Activated T-helper 2 cell treated with anti-CD3 and anti-CD28 coated beads, Interferon-gamma antibody, Interleukin-2, Interleukin-4, amounts not matched to agents 10 μg/mL and 5 μg/mL and 100 μg/mL, durations not matched to agents 14 hours and 24 hours and 36 hours (primary cell): ENCODE measurements at regions of chr18 and their contacts with region 1.

Region 1: DNA sequence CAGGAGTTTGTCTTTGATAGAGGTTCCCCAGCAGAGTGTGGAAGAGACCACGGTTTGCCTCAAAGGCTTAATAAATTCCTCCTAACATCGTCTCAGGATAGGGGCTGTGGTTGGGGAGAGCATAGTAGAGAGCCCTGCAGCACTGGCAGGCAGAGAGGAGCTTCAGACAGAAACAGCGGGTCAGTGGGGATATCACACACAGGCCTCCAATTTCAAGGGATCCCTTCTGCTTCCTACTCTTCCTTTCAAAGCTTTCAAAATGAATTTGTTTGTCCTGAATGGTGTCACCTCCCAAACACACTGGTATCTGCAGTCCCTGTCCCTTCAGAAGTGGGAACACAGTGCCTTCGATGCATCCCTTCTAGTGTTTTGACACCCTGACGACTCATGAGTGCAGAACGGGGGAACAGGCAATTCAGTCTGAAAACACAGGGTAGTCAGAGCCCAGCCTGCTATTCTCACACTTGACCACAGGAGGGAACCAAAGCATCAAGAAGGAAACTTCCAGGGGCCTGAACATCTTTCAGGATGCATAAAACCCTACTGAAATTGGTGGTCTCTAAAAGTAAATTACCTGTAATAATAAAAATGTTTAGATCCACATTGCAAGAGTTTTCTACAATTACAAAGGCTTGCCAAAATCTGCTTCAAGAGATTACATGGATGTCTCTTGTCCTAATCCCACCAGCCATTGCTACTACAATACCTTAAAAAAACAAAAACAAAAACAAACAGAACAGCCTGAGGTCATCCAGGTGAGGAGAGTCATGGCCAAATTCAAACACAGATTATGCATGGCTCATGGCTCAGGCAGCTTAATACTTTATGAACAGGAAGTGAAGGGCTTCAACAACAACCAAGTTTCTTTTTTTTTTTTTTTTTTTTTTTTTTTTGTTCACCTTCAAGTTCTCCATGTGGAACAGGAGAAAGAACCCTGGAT is 49.8 kb downstream of the SLC14A2 start:
- DNase-seq: peak; percentile 54
- H3K4me3 Mint-ChIP-seq: no peak overlapping the region
- H3K27ac Mint-ChIP-seq: peak overlapping the region; percentile 48
- H3K4me1 Mint-ChIP-seq: peaks cover 50% of the 10 kb centered on the region
- H3K27me3 Mint-ChIP-seq: peaks cover 14% of the 10 kb centered on the region

Region 2: DNA sequence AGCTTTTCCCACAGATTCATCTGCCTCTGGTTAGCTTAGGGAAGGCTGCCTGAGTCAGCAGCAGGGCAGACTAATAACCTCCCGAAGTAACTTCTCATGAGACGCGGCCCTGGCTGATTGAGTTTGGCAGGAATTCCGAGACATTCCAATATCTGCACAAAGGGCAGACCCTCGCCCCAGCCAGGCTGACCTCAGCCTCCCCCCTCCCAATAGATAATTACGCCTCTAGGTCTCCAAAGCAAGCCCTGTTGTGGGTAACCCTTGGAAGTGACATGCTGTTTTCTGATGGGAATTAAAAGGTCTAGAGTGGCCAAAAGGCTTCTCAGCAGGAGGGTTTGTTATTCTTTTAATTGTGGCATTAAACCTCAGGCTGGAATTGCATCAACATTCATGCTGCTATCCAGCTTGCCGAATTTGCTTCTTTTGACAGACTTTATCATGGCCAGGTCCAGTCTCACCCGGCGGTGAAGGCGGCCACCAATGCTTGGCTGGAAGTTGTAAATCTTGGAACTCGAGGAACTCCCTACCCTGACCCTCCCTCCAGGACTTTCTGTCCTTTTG is 147.8 kb before region 1 on chr18:
- intact Hi-C with region 1: no loop called
- DNase-seq: no peak
- H3K4me3 Mint-ChIP-seq: no peak overlapping the region
- H3K27ac Mint-ChIP-seq: no peak overlapping the region
- H3K4me1 Mint-ChIP-seq: peaks cover 2% of the 10 kb centered on the region
- H3K27me3 Mint-ChIP-seq: no peaks in the 10 kb centered on the region

Region 3: GRCh38 chr18:45626330-45627203 is 38.5 kb before region 1 on chr18:
- intact Hi-C with region 1: no loop called
- DNase-seq: no peak
- H3K4me3 Mint-ChIP-seq: no peak overlapping the region
- H3K27ac Mint-ChIP-seq: no peak overlapping the region
- H3K4me1 Mint-ChIP-seq: peaks cover 2% of the 10 kb centered on the region
- H3K27me3 Mint-ChIP-seq: peaks cover 16% of the 10 kb centered on the region

Region 4: DNA sequence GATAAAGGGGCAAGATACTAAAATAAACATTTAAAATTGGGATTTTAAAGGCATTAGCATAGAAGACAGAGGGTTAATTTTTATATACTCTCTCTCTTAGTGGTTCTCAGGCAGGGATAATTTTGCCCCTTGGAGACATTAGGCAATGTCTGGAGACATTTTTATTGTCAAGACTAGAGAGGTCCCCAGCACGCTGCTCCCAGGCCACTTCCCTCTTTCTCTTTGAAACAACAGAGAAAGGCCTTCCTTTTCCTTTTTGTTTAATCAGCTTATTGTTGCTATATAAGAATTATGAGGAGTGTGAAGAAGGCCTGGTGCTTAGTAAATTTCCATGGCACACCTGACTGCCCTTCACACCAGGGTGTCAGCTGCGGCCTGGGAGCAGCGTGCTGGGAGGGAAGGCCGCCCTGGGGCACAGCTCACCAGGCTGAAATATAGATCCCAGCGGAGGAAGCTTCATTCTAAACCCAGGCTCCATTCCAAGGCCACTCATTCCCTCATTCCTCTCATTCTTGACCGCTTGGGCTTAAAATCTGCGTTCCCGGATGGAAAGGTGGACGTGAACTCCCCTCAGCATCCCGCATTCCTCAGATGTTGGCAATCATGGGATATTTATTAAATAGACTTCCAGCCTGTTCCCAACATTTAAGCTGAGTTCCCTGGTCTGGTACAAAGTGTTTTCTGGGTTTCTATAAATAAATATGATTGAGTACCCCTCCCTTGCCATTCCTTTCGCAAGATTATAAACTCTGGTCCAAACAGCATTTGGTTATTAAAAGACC is 27.4 kb before region 1 on chr18:
- intact Hi-C with region 1: no loop called
- DNase-seq: no peak
- H3K4me3 Mint-ChIP-seq: no peak overlapping the region
- H3K27ac Mint-ChIP-seq: no peak overlapping the region
- H3K4me1 Mint-ChIP-seq: no peaks in the 10 kb centered on the region
- H3K27me3 Mint-ChIP-seq: peaks cover 11% of the 10 kb centered on the region

Region 5: DNA sequence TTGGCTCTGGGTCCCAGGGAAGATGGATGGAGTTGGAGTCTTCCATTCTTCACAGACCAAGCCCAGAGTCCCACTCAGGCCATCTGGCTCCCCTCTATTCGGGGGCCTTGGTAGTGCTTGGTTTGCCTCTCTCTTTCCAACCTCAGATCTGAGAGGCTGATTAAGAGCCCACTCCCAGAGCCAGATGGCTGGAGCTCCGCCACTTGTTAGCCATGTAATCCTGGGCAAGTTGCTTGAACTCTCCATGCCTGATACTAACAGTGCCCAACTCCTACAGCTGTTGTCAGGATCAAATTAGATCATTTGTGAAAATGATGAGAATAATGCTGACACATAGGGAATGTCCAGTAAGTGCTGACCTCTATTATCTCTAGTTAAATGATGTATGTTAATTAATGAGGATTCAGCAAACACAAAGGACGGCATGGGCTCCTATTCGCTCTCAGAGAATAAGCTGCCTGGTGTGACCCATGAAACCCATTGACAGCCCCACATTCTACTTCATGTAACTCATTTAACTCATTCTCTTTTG is 12.2 kb after region 1 on chr18:
- intact Hi-C with region 1: no loop called
- DNase-seq: no peak
- H3K4me3 Mint-ChIP-seq: no peak overlapping the region
- H3K27ac Mint-ChIP-seq: no peak overlapping the region
- H3K4me1 Mint-ChIP-seq: peaks cover 4% of the 10 kb centered on the region
- H3K27me3 Mint-ChIP-seq: peaks cover 57% of the 10 kb centered on the region

Region 6: DNA sequence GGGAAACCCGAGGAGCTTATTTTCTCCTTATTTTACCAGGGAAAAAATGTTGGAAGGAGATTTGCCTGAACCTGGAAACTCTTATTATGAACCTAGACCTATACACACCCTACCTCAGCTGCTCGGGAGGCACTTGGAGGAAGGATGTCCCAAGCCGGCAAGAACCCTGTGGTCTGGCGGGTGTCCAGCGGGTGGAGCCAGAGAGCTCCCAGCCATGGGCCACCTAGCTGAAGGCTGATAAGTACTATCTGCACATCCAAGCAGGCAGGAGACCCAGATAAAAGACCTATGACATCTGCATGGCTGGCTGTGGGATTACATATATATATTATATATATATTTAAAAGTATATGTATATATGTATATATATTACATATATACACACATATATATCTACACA is 57.8 kb after region 1 on chr18:
- intact Hi-C with region 1: loop called (anchors 2 kb)
- DNase-seq: peak; percentile 58
- H3K4me3 Mint-ChIP-seq: no peak overlapping the region
- H3K27ac Mint-ChIP-seq: no peak overlapping the region
- H3K4me1 Mint-ChIP-seq: peaks cover 4% of the 10 kb centered on the region
- H3K27me3 Mint-ChIP-seq: peaks cover 16% of the 10 kb centered on the region

Region 7: DNA sequence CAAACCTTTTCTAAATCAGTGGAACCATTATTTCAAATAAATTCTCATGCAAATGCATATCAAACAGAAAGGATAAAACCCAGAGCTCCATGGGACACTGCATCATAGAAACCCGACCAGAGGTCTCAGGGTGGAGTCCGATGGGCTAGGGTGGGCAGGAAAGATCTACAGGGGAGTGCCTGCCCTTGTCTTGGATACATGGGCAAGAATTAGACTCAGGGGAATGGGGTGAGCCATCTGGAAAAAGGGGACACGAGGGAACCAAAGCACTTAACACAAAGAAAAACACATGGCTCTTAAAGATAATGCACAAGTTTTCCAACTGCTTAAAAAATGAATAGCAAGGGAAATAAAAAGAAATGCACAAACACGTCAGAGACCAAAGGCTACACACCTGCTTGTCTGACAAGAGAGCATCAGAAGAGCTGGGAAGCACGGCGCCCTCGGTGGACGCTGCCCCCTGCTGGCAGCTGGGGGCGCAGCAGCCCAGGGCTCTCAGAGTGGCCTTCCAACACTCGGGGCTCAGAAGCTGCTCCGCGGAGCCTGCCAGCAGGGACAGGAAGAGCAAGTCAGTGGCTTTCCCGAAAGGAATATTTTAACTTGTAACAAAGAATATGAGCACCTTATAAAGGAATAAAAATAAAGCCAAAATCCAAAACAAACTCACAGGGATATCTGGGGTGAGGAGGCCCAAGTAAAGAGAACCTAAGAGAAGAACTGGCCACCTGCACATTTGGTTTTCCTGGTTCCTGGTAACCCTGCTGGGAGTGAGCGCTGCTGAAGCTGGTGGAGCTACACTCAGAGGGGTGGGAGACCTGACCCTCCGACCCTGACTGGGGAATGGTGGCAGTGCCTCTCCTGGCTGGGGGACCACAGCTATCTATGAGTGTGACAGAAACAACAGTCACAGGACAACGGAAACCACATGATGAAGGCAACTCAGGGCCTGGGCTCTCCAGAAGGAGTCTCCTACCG is 214.9 kb after region 1 on chr18:
- intact Hi-C with region 1: loop called (anchors 1 kb)
- DNase-seq: peak; percentile 52
- H3K4me3 Mint-ChIP-seq: no peak overlapping the region
- H3K27ac Mint-ChIP-seq: no peak overlapping the region
- H3K4me1 Mint-ChIP-seq: peaks cover 12% of the 10 kb centered on the region
- H3K27me3 Mint-ChIP-seq: no peaks in the 10 kb centered on the region

Region 8: DNA sequence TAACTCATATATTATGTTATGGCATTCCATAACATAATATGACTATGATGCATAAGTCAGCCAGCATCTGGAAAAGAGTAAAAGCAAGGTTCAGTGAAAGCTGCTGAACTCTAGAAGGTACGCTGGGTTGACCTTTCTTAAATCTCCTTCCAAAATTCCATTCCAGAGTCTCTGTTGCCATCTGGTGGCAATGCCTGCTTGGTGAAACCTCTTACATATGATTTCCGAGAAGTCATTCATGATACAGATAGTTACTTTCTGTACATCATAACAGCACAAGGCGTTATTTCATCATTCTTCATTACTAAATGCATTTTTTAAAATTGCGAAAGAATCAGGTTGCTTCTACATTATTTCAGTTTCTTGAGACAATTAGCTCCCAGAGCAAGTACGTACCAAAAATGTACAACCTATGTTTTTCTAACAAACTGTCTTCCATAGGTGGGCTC is 309.0 kb after region 1 on chr18:
- intact Hi-C with region 1: loop called (anchors 1 kb)
- DNase-seq: peak; percentile 55
- H3K4me3 Mint-ChIP-seq: no peak overlapping the region
- H3K27ac Mint-ChIP-seq: peak overlapping the region; percentile 38
- H3K4me1 Mint-ChIP-seq: peaks cover 23% of the 10 kb centered on the region
- H3K27me3 Mint-ChIP-seq: no peaks in the 10 kb centered on the region

Region 9: GRCh38 chr18:46250084-46250811 is 585.2 kb after region 1 on chr18:
- intact Hi-C with region 1: loop called (anchors 10 kb)
- DNase-seq: peak; percentile 67
- H3K4me3 Mint-ChIP-seq: peak overlapping the region; percentile 14
- H3K27ac Mint-ChIP-seq: peak overlapping the region; percentile 79
- H3K4me1 Mint-ChIP-seq: peaks cover 55% of the 10 kb centered on the region
- H3K27me3 Mint-ChIP-seq: no peaks in the 10 kb centered on the region